Colonic mucosa (tissue), 4 donors: ENCODE measurements at regions of chr11 and their contacts with region 1.

Region 1: DNA sequence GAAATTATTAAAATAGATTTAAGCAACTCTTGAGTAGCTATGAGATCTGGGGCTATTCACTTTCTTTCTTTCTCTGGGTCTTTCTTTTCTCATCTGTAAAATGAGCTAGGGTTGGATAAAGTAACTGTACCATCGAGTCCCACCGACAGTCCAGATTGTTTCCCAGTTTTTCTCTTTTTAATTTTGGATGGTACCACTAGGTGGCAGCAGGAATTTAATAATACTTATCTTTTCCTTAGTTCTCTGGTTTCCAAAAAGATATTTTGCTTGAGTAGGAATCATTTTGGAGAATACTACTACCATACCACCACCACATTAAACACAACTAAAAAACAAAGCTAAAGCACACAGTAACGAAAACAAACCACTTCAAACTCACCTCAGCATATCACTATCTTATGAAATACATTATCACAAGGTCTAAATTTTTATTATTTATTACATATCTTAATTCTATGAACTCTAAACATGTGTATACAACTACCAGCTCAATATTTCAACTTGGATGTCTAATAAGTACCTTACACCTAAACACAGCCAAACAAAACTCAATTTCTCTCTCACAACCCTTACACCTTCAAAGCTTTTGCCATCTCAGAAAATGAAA is 584.0 kb downstream of the KCNA4 start:
- DNase-seq: no peak
- H3K4me3 ChIP-seq: no peak overlapping the region
- H3K27ac ChIP-seq: no peak overlapping the region
- H3K4me1 ChIP-seq: no peaks in the 10 kb centered on the region
- H3K27me3 ChIP-seq: no peaks in the 10 kb centered on the region
- CTCF ChIP-seq: no peak

Region 2: DNA sequence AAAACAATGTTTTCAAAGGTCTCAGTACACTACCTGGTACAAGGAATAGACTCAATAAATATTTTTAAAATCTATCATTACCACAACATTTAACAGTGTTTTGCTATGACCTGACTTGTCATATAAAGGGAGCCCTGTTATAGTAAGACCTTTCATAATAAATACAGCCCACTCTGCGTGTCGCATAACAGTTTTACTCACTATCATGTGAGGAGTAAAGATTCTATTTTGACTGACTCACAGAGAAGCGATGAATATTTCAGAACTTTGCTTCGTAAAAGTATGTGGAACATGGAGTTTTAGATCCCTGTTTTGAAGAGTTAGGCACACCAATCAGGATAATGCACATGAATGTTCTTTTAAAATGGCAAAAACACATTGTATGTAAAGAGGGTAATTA is 52.8 kb after region 1 on chr11:
- intact Hi-C with region 1: no loop called
- DNase-seq: no peak
- H3K4me3 ChIP-seq: no peak overlapping the region
- H3K27ac ChIP-seq: no peak overlapping the region
- H3K4me1 ChIP-seq: no peaks in the 10 kb centered on the region
- H3K27me3 ChIP-seq: no peaks in the 10 kb centered on the region
- CTCF ChIP-seq: no peak

Region 3: DNA sequence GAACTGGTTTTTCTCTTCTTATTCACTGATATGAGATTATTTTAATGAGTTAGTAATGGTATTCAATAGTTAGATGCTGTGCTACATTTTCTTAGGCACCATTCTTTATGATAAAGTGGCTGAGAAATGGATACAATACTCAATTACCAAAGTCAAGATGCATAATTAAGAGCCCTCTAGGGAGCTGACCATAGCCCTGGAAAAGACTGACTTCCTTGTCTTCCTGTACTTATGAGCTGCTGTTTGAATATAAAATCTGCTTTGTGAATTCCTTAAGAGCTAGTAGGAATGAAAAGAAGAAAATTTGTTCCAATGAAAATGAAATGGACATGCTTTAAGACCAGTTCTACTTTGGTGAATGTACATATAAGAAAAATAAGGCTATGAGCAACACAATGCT is 131.7 kb after region 1 on chr11:
- intact Hi-C with region 1: no loop called
- DNase-seq: no peak
- H3K4me3 ChIP-seq: no peak overlapping the region
- H3K27ac ChIP-seq: no peak overlapping the region
- H3K4me1 ChIP-seq: no peaks in the 10 kb centered on the region
- H3K27me3 ChIP-seq: no peaks in the 10 kb centered on the region
- CTCF ChIP-seq: no peak

Region 4: GRCh38 chr11:30917859-30918478 is 1485.1 kb after region 1 on chr11:
- intact Hi-C with region 1: loop called (anchors 10 kb)
- DNase-seq: no peak
- H3K4me3 ChIP-seq: no peak overlapping the region
- H3K27ac ChIP-seq: no peak overlapping the region
- H3K4me1 ChIP-seq: no peaks in the 10 kb centered on the region
- H3K27me3 ChIP-seq: no peaks in the 10 kb centered on the region
- CTCF ChIP-seq: peak; percentile 79